Transverse colon (tissue), 4 donors: ENCODE measurements at regions of chr10 and their contacts with region 1.

Region 1: DNA sequence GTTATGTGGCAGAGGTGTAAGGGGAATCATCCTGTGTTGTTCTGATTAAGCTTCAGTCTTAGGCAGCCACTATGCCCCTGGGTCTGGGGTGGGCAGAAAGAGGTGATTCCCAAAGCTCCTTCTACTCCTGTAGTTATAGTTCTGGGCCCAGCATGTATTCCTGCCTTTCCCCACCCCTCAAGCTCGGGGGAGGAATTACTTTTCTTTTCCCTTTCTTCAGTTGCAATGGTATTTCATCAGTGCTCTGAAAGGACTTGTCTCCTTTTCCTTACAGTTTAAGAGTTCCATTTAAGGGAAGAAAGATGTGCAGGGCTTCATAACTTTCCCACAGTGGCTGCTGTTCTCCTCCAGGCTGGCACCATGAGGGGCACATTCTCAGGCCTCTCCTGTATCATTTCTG is 94.2 kb downstream of the MTPAP start:
- DNase-seq: no peak
- H3K4me3 ChIP-seq: no peak overlapping the region
- H3K27ac ChIP-seq: no peak overlapping the region
- H3K4me1 ChIP-seq: no peaks in the 10 kb centered on the region
- H3K27me3 ChIP-seq: no peaks in the 10 kb centered on the region
- CTCF ChIP-seq: no peak
- EP300 ChIP-seq: no peak
- POLR2A ChIP-seq: no peak

Region 2: DNA sequence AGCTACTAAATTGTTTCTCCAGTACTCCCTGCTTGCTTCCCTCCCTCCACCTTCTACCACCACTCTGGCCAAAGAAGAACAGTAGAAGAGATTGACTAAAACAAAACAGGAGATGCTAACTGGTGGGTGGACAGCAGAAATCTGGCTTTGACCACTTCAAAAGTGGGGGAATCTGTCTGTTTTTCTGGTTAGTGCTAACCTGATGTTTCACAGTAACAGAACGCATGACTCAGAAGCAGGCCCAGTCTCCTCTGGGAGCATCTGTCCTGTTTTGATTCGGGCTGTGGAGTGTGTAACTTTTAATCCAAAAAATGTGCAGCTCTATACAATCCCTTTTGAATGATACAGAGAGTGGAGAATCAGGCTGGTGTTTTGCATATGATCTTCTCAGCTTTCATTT is 809.4 kb after region 1 on chr10:
- in situ Hi-C with region 1: no loop called
- intact Hi-C with region 1: loop called (anchors 5 kb)
- DNase-seq: no peak
- H3K4me3 ChIP-seq: no peak overlapping the region
- H3K27ac ChIP-seq: peak overlapping the region in 2 of 4 donors; percentile 42 to 58
- H3K4me1 ChIP-seq: peaks cover 0 to 3% (median 0%) of the 10 kb centered on the region in 4 donors
- H3K27me3 ChIP-seq: no peaks in the 10 kb centered on the region
- CTCF ChIP-seq: no peak
- EP300 ChIP-seq: no peak
- POLR2A ChIP-seq: no peak